Activated CD8-positive, alpha-beta memory T cell treated with anti-CD3 and anti-CD28 coated beads, Interleukin-2, amount 10 ng/mL, durations not matched to agents 7 days and 5 days (primary cell): ENCODE measurements at regions of chr1 and their contacts with region 1.

Region 1: DNA sequence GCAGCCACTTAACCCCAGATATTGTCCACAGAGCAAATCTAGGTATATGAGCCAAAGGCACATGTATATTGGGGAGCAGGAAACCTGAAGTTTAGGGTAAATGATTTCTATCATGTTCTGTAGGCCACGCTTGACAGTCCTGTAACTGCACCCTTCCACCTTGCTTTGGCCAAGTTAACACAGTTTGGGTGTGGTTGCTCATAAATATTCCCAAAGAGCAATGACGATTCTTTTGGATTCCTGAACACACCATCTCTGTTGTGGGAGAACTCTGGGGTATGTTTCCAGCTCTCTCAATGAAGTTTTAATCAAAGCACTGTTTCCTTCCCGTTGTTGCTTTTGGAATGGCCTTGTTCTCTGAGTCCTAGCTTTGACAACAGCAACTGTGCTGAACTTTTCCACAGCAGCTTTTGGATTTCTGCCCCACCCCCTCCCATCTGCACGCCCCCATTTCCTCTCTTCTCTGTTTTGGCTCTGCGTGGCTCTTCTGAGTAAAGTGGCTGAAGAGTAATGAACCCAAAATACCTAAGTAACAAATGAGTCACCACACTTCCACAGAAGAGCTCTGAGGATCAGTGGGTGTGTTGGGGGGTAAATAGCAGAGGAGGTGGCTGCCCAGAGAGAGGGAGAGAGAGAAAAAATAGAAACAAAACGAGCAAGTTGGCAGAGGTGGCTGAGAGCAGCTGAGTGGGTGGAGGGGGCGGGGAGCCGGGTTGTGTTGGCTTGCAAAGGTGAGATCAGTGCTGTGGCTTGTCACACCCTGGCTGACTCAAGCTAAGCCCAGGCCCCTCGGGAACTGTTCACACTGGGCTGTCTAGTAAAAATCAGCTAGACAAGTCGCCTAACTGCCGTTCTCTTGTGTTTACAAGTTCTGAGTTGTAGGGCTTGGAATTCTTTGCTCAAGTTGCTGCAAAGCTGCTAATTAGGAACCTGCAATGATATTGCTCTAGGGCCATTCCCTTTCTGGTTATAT is 26.9 kb upstream of the RAP1A start:
- DNase-seq: peak; percentile 98
- ATAC-seq: peak; percentile 94
- H3K4me3 Mint-ChIP-seq: peak overlapping the region; percentile 58
- H3K27ac Mint-ChIP-seq: peak overlapping the region; percentile 96
- H3K4me1 Mint-ChIP-seq: peaks cover 75% of the 10 kb centered on the region
- H3K27me3 Mint-ChIP-seq: no peaks in the 10 kb centered on the region

Region 2: DNA sequence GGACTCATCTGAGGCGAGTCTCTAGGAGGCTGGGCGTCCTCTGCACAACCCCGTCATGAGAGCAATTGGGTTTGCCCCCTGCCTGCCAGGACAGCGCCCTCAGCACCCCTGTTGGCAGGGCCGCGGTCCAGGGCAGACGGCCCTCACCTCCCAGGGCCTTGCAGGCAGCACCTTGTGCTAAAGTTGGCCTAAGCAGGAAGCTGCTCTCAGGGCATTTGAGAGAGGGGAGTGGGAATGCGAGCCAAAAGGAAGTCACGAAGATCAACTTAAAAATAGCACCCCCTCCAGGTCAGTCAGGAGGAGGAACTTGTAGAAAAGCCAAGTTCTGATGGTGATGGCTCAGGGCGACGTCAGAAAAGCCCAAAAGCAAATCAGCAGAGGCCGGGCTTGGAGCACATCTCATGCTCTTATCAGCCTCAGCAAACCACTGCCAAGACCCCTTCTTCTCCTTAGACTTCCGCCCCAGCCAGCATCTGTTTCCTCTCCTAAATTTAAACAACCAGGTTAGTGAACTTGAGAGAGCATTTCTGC is 76.6 kb before region 1 on chr1:
- CTCF ChIA-PET with region 1: interaction called, 11 read pairs
- DNase-seq: peak; percentile 65
- ATAC-seq: peak; percentile 68
- H3K4me3 Mint-ChIP-seq: peak overlapping the region; percentile 52
- H3K27ac Mint-ChIP-seq: peak overlapping the region; percentile 86
- H3K4me1 Mint-ChIP-seq: peaks cover 57% of the 10 kb centered on the region
- H3K27me3 Mint-ChIP-seq: no peaks in the 10 kb centered on the region

Region 3: GRCh38 chr1:111603979-111604378 is 11.3 kb after region 1 on chr1:
- CTCF ChIA-PET with region 1: interaction called, 52 read pairs
- DNase-seq: peak; percentile 95
- ATAC-seq: peak; percentile 90
- H3K4me3 Mint-ChIP-seq: peak overlapping the region; percentile 56
- H3K27ac Mint-ChIP-seq: peak overlapping the region; percentile 96
- H3K4me1 Mint-ChIP-seq: peaks cover 77% of the 10 kb centered on the region
- H3K27me3 Mint-ChIP-seq: no peaks in the 10 kb centered on the region

Region 4: GRCh38 chr1:111619635-111620440 is 27.2 kb after region 1 on chr1 and contains the start of gene RAP1A:
- CTCF ChIA-PET with region 1: interaction called, 102 read pairs
- DNase-seq: peak; percentile 96
- ATAC-seq: peak; percentile 78
- H3K4me3 Mint-ChIP-seq: peak within 1 kb of the TSS; percentile 94
- H3K27ac Mint-ChIP-seq: peak within 1 kb of the TSS; percentile 92
- H3K4me1 Mint-ChIP-seq: peaks cover 68% of the 10 kb centered on the region
- H3K27me3 Mint-ChIP-seq: no peaks in the 10 kb centered on the region
- total RNA-seq, gene RAP1A: 161 to 224 TPM